Dendritic cell treated with granulocyte-macrophage colony-stimulating factor and Interleukin-4, amounts not matched to agents 40 ng/mL and 50 ng/mL, for 4 days (primary cell): ENCODE measurements at regions of chr20 and their contacts with region 1.

Region 1: GRCh38 chr20:19628570-19629169 is 129.4 kb upstream of the RIN2 start:
- H3K4me3 Mint-ChIP-seq: no peak overlapping the region
- H3K27ac Mint-ChIP-seq: no peak overlapping the region
- H3K4me1 Mint-ChIP-seq: peaks cover 8% of the 10 kb centered on the region
- H3K27me3 Mint-ChIP-seq: no peaks in the 10 kb centered on the region

Region 2: DNA sequence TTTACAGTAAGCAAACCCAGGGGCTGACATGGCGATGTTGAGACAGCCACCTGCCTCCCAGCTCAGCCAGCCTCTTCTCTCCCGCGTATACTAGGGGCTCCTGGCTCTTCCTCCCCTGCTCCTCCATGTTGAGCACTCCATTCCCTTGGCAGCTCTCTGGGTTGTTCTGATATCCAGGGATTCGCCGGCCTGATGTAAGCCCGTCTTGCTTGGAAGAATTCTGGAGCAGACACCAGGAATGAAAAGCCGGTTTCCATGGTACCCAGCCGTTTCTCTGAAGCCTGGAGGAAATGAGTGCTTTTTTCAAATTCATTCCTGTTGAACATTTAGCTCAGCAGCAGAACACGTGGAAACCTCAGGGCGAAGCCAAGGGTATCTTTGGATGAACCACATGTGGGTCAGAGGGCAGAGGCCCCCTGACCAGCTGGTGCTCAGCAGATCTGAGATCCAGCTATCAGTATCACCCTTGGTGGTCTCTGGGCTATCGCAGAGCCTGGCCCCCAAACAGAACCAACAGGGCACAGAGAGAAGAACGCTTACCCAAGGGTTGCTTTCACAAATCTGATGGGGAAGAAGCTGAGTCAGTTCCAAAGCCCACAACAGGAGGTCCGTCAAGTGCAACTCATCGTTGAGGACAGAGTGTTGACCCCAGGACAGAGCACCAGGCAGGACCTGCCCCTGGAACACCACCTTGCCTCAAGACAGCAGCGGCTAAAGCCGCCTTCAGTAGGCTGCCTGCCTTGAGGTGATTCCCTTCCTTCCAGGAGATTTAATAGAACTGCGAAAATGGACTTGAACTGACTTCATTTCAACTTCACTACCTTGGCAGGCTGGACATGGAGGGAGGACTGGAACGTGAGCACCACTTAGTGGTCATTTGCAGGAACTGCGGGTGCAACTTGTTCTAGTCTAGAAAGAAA is 33.3 kb after region 1 on chr20:
- intact Hi-C with region 1: loop called (anchors 1 kb)
- H3K4me3 Mint-ChIP-seq: no peak overlapping the region
- H3K27ac Mint-ChIP-seq: no peak overlapping the region
- H3K4me1 Mint-ChIP-seq: peaks cover 44% of the 10 kb centered on the region
- H3K27me3 Mint-ChIP-seq: peaks cover 31% of the 10 kb centered on the region